Calu3 (cell line): ENCODE measurements at regions of chr2 and their contacts with region 1.

Region 1: GRCh38 chr2:168169097-168169745 is 78.2 kb downstream of the STK39 start:
- DNase-seq: no peak
- H3K4me3 Mint-ChIP-seq: no peak overlapping the region
- H3K27ac Mint-ChIP-seq: no peak overlapping the region
- H3K4me1 Mint-ChIP-seq: peaks cover 29% of the 10 kb centered on the region
- H3K27me3 Mint-ChIP-seq: no peaks in the 10 kb centered on the region
- CTCF ChIP-seq: no peak

Region 2: GRCh38 chr2:168181825-168182224 is 12.6 kb after region 1 on chr2:
- CTCF ChIA-PET with region 1: no interaction called
- intact Hi-C with region 1: loop called (anchors 2 kb)
- DNase-seq: no peak
- H3K4me3 Mint-ChIP-seq: no peak overlapping the region
- H3K27ac Mint-ChIP-seq: no peak overlapping the region
- H3K4me1 Mint-ChIP-seq: peaks cover 51% of the 10 kb centered on the region
- H3K27me3 Mint-ChIP-seq: no peaks in the 10 kb centered on the region
- CTCF ChIP-seq: no peak